HAP-1 (cell line): ENCODE measurements at regions of chr12 and their contacts with region 1.

Region 1: GRCh38 chr12:46342562-46343033 is 30.0 kb downstream of the SLC38A2 start:
- DNase-seq: peak in 1 of 2 experiments; percentile 20
- H3K4me3 ChIP-seq: no peak overlapping the region
- H3K4me1 ChIP-seq: no peaks in the 10 kb centered on the region
- H3K27me3 ChIP-seq: no peaks in the 10 kb centered on the region

Region 2: DNA sequence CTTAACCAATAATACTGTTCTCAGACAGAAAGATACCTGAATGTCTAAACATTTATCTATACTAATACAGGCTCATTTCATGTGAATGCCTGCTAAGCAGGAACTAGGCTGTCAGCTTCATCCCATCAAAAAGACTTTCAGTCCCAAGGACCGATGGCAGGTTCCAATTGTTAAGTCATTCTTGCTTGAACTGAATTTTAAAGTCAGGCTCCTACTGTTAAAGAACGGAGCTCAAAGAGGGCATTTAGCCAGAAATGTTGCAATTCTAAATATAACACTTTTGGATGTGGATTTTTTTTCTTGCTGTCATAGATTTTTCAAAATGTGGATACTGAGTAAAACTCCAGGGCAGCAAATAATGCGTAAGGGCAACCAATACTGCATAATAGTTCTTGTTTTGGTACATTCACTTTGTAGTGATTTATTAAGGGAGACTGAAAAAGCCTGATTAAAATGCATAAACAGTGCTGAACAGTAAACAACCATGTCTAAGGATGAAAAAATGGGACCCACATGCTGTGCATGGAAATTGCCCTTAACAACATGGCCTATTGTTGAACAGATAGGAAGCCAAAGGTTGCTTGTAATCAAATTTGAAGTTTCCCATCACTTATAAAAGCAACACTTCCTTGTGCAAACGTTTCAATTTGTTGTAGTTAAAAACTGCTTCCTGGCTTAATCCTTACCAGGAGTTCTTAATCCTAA is 1253.0 kb before region 1 on chr12:
- in situ Hi-C with region 1: no loop called
- DNase-seq: peak in 1 of 2 experiments; percentile 5
- H3K4me3 ChIP-seq: no peak overlapping the region
- H3K4me1 ChIP-seq: no peaks in the 10 kb centered on the region
- H3K27me3 ChIP-seq: no peaks in the 10 kb centered on the region

Region 3: GRCh38 chr12:47021298-47021697 is 678.7 kb after region 1 on chr12:
- in situ Hi-C with region 1: loop called (anchors 25 kb)
- DNase-seq: peak; percentile 22 to 35
- H3K4me3 ChIP-seq: no peak overlapping the region
- H3K4me1 ChIP-seq: no peaks in the 10 kb centered on the region
- H3K27me3 ChIP-seq: no peaks in the 10 kb centered on the region